ENCODE measurements at regions of chr14 and their contacts with region 1.

Region 1: GRCh38 chr14:32252030-32252670 is 49.1 kb upstream of the RNU6-8 start:
- DNase-seq: peak; percentile 45
- H3K4me3 ChIP-seq: no peak overlapping the region
- H3K27ac ChIP-seq: no peak overlapping the region
- H3K27me3 ChIP-seq: peaks cover 2% of the 10 kb centered on the region
- CTCF ChIP-seq: peak; percentile 94

Region 2: GRCh38 chr14:31510222-31510621 is 741.9 kb before region 1 on chr14:
- CTCF ChIA-PET with region 1: interaction called, 18 read pairs
- POLR2A ChIA-PET with region 1: no interaction called
- DNase-seq: no peak
- H3K4me3 ChIP-seq: no peak overlapping the region
- H3K27ac ChIP-seq: no peak overlapping the region
- H3K27me3 ChIP-seq: no peaks in the 10 kb centered on the region
- CTCF ChIP-seq: peak; percentile 57

Region 3: GRCh38 chr14:31934767-31935266 is 317.3 kb before region 1 on chr14:
- CTCF ChIA-PET with region 1: interaction called, 14 read pairs
- POLR2A ChIA-PET with region 1: interaction called, 6 read pairs
- DNase-seq: no peak
- H3K4me3 ChIP-seq: no peak overlapping the region
- H3K27ac ChIP-seq: no peak overlapping the region
- H3K27me3 ChIP-seq: no peaks in the 10 kb centered on the region
- CTCF ChIP-seq: peak; percentile 43; the same call in 1 of the 2 replicates

Region 4: DNA sequence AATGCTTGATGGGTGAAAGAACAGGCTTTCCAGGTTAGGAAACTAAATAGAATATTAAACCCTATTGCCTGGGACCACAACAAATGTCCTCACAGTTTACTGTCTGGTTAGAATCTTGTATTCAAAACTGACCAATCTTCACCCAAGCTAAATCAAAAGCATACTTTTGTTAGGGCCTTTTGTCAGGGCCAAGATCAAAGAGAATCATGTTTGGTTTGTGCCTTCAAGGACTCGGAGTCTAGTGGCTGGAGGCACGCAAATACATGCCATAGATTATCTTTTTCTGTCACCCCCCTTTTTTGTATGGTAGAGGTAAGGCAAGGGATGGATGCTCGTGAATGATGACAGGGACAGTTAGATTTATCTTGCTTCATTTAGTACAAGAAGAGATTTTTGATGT is 25.8 kb after region 1 on chr14:
- CTCF ChIA-PET with region 1: no interaction called
- POLR2A ChIA-PET with region 1: no interaction called
- DNase-seq: no peak
- H3K4me3 ChIP-seq: no peak overlapping the region
- H3K27ac ChIP-seq: peak overlapping the region; percentile 2
- H3K27me3 ChIP-seq: peaks cover 3% of the 10 kb centered on the region
- CTCF ChIP-seq: no peak

Region 5: GRCh38 chr14:32469388-32470160 is 217.4 kb after region 1 on chr14:
- CTCF ChIA-PET with region 1: interaction called, 36 read pairs
- POLR2A ChIA-PET with region 1: interaction called, 7 read pairs
- DNase-seq: no peak
- H3K4me3 ChIP-seq: no peak overlapping the region
- H3K27ac ChIP-seq: no peak overlapping the region
- H3K27me3 ChIP-seq: no peaks in the 10 kb centered on the region
- CTCF ChIP-seq: peak; percentile 54

Region 6: DNA sequence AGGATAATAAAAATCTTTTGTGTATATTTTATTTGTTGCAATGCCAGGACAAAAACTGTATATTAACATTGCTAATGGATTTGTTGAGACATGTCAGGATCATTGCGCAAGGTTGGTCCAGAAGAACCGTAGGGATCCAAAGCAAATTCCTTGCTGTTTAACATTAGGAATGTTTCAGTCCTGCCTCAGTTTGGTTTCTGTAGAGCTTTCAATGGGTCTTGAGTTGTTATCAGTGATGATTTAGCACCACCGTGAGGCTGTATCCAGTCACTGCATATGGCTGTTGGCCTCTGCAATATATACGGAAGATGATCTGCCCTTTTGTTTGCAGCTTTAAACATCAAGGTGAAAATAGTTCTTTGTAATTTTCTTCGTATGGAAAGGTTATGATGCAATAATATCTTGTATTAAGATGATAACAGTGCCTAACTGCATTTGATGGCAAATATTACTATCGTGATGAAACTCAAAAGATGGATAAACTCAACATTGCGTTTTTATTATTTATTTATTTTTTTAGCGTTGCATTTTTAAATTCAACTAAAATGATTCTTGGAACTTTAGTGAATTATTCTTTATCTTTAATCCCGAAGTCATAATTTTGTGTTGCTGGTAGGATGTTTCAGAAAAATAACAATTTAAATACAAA is 308.2 kb after region 1 on chr14:
- CTCF ChIA-PET with region 1: interaction called, 17 read pairs
- POLR2A ChIA-PET with region 1: no interaction called
- DNase-seq: peak; percentile 71
- H3K4me3 ChIP-seq: no peak overlapping the region
- H3K27ac ChIP-seq: no peak overlapping the region
- H3K27me3 ChIP-seq: no peaks in the 10 kb centered on the region
- CTCF ChIP-seq: peak; percentile 95